ENCODE measurements at regions of chr14 and their contacts with region 1.

Region 1: DNA sequence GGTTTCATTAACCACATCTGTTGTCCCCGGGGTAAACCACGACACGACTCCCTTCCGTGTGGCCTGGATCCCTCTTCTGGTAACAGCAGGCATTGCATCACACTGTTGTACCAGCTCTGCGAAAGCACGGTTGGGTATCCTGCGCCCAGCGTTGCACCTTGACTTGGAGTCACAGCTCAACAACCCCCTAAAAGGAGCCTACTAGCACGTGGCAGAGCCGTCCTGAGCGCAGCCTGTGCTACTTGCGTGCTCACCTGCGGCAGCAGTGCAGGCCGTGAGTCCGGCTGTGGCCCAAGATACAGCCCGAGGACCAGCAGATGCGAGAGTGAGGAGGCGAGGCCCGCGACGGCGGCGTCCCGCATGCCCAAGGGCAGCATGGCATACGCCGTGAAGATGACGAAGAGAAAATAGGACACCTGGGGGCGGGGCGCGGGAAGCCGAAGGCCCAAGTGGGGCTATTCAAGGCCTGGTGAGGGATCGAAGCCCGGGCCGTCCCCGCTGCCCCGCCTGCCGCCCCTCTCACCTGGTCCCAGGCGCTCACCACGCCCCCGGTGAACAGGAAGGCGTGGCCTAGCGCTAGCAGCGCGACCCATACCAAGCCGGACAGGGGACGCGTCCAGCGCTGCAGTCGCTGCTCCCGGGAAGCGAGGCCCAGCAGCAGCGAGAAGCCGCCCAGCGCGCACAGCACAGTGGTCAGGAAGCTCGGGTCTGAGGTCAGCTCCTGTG is 2.4 kb downstream of the ADCY4 start:
- DNase-seq: peak; percentile 71 to 93
- ATAC-seq: peak; percentile 71 to 84
- H3K4me3 ChIP-seq: no peak overlapping the region; the same call in 2 of the 3 replicates
- H3K27ac ChIP-seq: peak overlapping the region in 1 of 2 experiments; percentile 45; a peak in 1 of 6 replicates
- H3K4me1 ChIP-seq: peaks cover 3% of the 10 kb centered on the region; the same call in 1 of the 3 replicates
- CTCF ChIP-seq: peak; percentile 46
- EP300 ChIP-seq: no peak
- POLR2A ChIP-seq: no peak
- RAD21 ChIP-seq: peak in 1 of 2 experiments; percentile 46; a peak in 3 of 5 replicates

Region 2: DNA sequence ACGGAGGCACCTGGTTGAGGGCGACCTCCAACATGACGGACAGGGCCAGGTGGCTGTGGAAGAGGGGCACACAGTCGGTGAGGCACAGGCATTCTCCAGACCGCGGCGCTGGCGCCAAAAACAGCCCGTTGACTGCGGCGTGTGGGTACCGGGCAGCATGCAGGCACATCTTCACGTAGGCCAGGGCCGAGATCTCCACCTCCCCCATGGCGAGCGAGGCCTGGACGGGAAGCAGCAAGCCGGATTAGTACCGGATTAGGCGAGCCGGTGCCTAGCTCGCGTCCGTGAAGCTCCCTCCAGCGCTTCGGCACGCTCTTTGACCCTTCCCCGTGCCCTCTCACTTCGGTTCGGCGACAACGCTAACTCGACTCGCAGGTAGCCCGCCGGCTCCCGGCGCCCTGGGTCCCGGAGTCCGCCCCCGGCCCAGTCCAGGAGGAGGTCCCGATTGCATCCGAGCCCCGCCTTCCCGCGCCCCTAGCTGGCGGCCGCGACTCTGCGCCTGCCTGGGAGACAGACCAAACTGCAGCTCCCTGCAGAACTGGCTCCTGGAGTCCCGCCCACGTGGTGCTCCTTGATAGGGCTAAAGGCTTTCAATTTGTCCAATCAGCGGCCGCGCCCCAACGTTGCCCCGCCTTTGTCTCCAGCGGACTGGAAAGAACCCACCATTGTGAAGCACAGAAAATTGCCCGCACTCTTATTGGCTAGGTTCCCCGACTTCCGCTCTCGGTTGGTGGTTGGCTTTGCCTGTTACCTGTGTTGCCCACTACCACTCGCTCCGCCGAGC is 191.1 kb before region 1 on chr14 and contains the start of gene EMC9:
- CTCF ChIA-PET with region 1: no interaction called
- POLR2A ChIA-PET with region 1: no interaction called
- DNase-seq: peak; percentile 99
- ATAC-seq: peak; percentile 81 to 93
- H3K4me3 ChIP-seq: peak within 1 kb of the TSS; percentile 59
- H3K27ac ChIP-seq: peak within 1 kb of the TSS; percentile 86 to 95
- H3K4me1 ChIP-seq: peaks cover 39% of the 10 kb centered on the region
- CTCF ChIP-seq: no peak
- EP300 ChIP-seq: no peak
- POLR2A ChIP-seq: peak; percentile 81; the same call in 1 of the 2 replicates
- RAD21 ChIP-seq: no peak; a peak in 1 of 5 replicates
- polyA plus RNA-seq, gene EMC9: 20.7 and 21.5 TPM in 2 replicates

Region 3: DNA sequence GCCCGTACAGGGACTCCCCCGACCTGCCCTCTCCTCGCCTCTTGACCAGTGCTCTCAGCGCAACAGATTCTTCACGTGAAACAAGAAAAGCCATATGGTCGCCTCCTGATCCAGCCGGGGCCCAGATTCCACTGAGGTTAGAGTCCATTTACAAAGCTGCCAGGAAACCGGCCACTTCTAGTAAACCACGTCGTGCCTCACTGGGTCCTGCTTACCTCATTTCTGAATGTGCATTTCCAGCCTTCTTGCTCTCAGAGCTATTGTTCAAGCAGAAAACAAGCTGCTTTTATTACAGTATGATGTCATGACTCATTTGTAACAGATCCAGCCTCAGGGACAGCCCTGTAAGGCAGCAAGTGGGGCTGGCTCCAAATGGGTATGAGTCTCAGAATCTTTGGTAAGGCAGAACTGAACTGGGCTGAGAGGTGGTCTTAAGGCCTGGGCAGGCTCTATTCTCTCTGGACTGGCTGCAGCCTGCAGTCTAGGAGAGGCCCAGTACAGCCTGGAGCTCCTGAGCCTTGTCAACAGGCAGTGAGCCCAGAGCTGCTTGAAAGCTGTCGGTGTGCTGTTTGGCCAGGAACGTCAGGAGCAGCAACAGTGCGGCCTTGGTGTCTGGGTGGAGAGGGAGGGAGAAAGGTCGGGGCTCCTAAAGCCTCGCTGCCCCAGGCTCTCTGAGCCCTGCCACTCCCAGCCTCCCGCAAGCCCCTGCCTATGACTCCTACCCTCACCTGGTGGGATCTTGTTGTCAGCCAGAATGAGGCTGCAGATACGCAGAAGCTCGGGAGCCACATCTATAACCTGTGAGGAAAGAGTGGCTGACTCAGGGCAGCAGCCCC is 152.3 kb before region 1 on chr14:
- CTCF ChIA-PET with region 1: no interaction called
- POLR2A ChIA-PET with region 1: no interaction called
- DNase-seq: no peak
- ATAC-seq: 0 out of 6 replicates have a peak, but pooled peaks of 1 of the 2 experiments have one; percentile 3
- H3K4me3 ChIP-seq: no peak overlapping the region
- H3K27ac ChIP-seq: no peak overlapping the region
- H3K4me1 ChIP-seq: no peaks in the 10 kb centered on the region
- CTCF ChIP-seq: no peak
- EP300 ChIP-seq: no peak
- POLR2A ChIP-seq: no peak
- RAD21 ChIP-seq: no peak

Region 4: DNA sequence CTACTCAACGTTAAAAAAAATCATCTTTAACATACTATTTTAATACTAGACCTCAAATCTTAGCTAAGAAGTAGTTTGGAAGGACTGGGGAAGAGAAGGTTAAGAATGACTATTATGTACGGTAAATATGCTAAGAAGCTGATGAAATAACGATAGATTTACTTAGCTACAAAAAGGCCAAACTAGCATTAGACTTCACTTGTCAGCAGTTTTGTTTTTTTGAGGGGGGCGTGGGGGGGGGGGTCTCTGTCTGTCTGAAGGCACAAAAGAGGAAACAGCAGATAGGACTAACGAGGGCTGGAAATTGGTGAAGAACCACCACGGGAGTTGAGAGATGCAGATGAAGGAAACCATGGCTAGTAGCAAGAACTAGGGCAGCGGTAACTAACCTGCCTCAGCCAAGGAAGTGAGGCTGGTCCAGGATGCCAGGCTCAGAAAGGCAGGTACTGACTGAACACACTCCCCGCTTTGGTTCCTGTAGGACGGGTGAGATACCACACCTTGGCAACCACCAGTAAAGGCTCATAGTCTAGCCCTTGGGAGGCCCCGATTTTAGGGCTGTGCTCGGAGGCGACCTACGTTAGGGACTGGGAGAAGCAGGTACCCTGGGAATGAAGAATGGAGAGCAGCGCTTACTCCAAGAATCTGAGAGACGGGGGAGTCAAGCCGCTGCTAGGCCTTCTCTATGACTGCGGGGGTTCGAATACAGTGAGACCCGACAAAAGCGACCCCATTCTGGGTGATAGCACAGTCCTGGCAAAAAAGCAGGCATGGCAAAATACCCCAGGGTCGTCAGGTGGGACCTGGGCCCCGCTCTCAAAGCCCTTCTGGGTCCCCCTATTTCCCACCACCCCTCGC is 100.9 kb before region 1 on chr14:
- CTCF ChIA-PET with region 1: no interaction called
- POLR2A ChIA-PET with region 1: no interaction called
- DNase-seq: peak in 1 of 2 experiments; percentile 36
- ATAC-seq: peak; percentile 25 to 45; a peak in 5 of 6 replicates
- H3K4me3 ChIP-seq: peak overlapping the region; percentile 73
- H3K27ac ChIP-seq: peak overlapping the region; percentile 85 to 96
- H3K4me1 ChIP-seq: peaks cover 18% of the 10 kb centered on the region
- CTCF ChIP-seq: no peak
- EP300 ChIP-seq: no peak
- POLR2A ChIP-seq: no peak
- RAD21 ChIP-seq: no peak

Region 5: GRCh38 chr14:24310646-24311604 is 21.5 kb before region 1 on chr14 and contains the start of gene LTB4R:
- CTCF ChIA-PET with region 1: interaction called, 76 read pairs
- POLR2A ChIA-PET with region 1: no interaction called
- DNase-seq: no peak
- ATAC-seq: no peak
- H3K4me3 ChIP-seq: no peak within 1 kb of the TSS
- H3K27ac ChIP-seq: no peak within 1 kb of the TSS
- H3K4me1 ChIP-seq: peaks cover 16% of the 10 kb centered on the region
- CTCF ChIP-seq: no peak
- EP300 ChIP-seq: no peak
- POLR2A ChIP-seq: no peak
- RAD21 ChIP-seq: no peak
- polyA plus RNA-seq, gene LTB4R: 10.2 and 13.2 TPM in 2 replicates

Region 6: DNA sequence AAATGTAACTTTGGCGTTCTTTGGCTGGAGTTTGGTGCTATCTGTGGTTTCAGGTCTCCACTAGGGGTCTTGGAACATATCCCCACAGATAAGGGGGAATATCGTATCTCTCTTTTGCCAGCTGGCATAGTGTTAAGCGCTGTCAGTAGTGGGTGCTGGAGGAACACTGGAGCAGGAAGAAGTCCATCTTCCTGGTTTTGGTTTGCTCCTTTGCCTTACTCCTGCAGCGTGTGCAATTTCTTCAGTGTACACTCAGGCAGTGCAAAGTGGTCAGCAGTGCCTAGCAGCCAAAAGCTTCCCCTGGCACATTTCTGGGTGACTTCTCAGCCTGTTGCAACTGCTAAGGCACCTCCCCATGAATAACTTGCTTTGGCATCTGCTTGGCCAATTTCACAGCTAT is 19.1 kb after region 1 on chr14:
- CTCF ChIA-PET with region 1: interaction called, 40 read pairs
- POLR2A ChIA-PET with region 1: no interaction called
- DNase-seq: no peak
- ATAC-seq: peak; percentile 55 to 70; a peak in 4 of 6 replicates
- H3K4me3 ChIP-seq: no peak overlapping the region
- H3K27ac ChIP-seq: no peak overlapping the region
- H3K4me1 ChIP-seq: peaks cover 17% of the 10 kb centered on the region
- CTCF ChIP-seq: no peak
- EP300 ChIP-seq: no peak
- POLR2A ChIP-seq: no peak
- RAD21 ChIP-seq: no peak

Region 7: DNA sequence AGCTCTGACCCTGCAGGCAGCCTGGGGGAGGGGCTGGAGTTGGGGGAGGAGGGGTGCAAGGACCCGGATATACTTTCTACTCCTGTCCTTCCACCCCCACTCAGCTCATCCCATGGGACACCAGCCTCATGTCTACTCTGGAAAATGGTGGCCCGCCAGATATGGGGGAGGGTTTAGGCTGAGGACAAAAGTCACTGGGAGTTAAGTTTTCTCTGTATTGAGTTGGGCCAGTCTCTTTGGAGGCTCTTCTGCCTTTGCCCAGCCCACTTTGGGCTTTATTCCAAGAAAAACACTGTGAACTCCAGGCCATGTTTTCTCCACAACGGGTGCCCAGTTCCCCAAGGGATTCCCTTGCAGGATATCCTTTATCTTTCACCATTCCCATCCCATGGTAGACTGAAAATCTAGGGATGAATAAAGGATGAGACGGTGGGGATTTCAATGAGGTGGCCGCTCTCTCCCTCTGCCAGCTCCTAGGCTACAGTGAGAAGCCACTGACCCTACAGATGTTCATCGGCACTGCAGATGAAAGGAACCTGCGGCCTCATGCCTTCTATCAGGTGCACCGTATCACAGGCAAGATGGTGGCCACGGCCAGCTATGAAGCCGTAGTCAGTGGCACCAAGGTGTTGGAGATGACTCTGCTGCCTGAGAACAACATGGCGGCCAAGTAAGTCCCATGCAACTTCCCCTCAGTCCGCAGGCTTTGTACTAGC is 40.4 kb after region 1 on chr14:
- CTCF ChIA-PET with region 1: interaction called, 20 read pairs
- POLR2A ChIA-PET with region 1: no interaction called
- DNase-seq: no peak
- ATAC-seq: no peak
- H3K4me3 ChIP-seq: no peak overlapping the region
- H3K27ac ChIP-seq: no peak overlapping the region
- H3K4me1 ChIP-seq: peaks cover 2% of the 10 kb centered on the region; the same call in 2 of the 3 replicates
- CTCF ChIP-seq: no peak
- EP300 ChIP-seq: no peak
- POLR2A ChIP-seq: no peak
- RAD21 ChIP-seq: no peak

Region 8: DNA sequence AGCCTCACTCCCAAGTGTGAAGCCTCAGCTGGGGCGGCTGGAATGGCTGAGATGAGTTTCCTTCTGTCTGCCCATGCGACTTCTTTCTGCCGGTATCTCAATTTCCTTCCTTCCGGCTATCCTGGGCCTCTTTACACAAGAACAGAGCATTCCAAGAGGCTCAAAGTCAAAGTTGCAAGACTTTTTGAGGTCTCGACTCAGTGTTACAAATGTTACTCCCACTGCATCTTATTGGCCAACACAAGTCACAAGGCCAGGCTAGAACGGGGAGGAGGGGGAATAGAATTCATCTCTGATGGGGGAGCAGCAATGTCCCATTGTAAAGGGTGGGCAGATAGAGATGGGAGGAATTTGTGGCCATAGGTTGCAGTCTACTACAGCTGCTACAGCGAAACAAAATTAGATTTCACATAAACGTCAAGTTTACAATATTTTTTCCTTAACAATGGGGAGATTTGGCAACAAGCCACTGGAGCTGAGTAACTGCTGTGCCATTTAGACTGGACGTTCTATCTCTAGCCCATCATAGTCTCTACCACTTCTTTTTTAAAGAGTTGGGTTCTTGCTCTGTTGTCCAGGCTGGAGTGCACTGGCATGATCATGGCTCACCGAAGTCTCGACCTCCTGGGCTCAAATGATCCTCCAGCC is 56.9 kb after region 1 on chr14:
- CTCF ChIA-PET with region 1: interaction called, 10 read pairs
- POLR2A ChIA-PET with region 1: no interaction called
- DNase-seq: no peak
- ATAC-seq: no peak
- H3K4me3 ChIP-seq: no peak overlapping the region
- H3K27ac ChIP-seq: no peak overlapping the region
- H3K4me1 ChIP-seq: peaks cover 14% of the 10 kb centered on the region
- CTCF ChIP-seq: no peak
- EP300 ChIP-seq: no peak
- POLR2A ChIP-seq: no peak
- RAD21 ChIP-seq: no peak

Region 9: DNA sequence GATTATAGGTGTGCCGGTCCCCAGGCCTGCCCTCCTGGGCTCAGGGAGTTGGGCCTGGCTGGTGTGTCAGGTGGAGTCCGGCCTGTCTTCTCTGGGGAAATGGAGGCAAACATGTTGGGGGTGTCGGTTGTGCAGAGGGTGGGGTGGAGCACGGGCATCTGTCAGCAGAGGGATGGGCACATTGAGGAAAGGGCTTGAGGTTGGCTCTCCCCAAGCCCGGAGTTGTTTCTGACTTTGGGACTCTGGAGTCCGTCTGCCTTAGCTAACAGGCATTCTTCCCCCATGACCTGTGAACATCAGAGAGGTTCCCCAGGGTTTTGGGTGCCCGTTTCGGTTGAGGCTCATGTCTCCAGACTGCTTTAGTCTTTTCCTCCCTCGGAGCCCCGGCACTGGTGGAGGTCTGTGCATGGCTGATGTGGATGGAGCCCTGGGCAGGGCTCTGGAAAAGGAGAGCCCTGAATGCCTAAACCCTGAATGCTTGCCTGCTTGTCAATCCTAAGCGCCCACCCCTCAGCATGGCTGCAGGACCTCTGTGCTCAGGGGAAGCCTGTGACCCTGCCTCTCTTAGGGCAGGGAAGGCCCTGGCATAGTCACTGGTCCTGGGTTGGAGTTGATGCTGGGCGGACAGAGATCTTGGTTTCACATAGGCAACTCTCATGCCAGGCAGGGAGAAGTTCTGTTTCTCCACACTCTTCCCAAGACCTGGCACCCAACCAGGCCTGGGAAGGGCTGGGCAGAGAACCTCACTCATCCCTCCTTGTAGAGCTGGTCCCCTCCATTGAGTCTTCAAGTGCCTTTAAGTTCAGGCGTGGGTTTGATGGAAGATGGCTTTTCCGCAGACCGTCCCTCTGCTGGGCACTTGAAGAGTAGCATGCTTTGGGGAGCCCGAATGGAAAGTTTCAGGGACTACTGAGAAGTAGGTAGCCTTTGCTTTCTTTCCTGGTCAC is 79.3 kb after region 1 on chr14:
- CTCF ChIA-PET with region 1: interaction called, 234 read pairs
- POLR2A ChIA-PET with region 1: no interaction called
- DNase-seq: peak; percentile 66 to 74
- ATAC-seq: peak; percentile 76 to 85
- H3K4me3 ChIP-seq: no peak overlapping the region
- H3K27ac ChIP-seq: no peak overlapping the region
- H3K4me1 ChIP-seq: no peaks in the 10 kb centered on the region
- CTCF ChIP-seq: peak; percentile 53
- EP300 ChIP-seq: no peak
- POLR2A ChIP-seq: no peak
- RAD21 ChIP-seq: peak; percentile 46 to 50